Right ventricle myocardium inferior (tissue), 1 donor: ENCODE measurements at regions of chr3 and their contacts with region 1.

Region 1: DNA sequence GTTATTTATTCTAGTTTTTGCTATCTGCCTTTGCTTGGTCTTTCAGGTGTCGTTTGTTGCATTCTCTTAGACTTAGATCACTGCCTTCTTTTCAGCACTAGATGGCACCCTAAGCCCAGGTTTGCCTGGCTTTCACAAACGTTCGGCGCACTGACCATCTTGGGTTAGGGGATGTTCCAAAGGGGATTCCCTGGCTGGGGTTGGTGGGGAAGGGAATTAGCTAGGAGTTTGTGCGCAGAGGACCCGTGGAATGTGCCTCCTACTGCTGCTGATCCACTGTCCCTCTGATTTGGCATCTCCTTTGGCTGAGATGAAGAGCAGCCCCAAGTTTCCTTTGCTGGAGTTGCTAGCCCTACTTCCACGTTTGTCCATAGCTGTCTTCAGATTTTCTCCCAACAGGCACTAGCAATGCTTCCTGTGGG is 33.9 kb downstream of the PFN2 start:
- DNase-seq: peak; percentile 50
- ATAC-seq: peak; percentile 44

Region 2: GRCh38 chr3:149717391-149718056 is 219.3 kb before region 1 on chr3:
- intact Hi-C with region 1: no loop called
- DNase-seq: no peak
- ATAC-seq: peak; percentile 57

Region 3: DNA sequence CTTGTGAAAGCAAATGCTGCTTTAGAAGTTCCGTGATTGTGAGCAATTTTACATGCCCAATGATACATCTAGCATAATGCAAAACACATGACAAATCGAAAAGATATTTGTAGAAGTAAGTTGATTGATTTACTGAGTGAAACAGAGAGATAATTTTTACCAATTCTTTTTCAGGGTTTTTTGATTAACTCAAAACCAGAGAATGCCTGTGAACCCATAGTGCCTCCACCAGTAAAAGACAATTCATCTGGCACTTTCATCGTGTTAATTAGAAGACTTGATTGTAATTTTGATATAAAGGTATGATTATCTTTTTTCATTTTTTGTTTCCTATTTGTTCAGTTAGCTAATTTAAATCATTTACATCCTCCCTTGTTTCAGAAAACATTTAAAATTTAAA is 65.0 kb before region 1 on chr3:
- intact Hi-C with region 1: no loop called
- DNase-seq: no peak
- ATAC-seq: no peak

Region 4: GRCh38 chr3:149990423-149990948 is 53.7 kb after region 1 on chr3:
- intact Hi-C with region 1: no loop called
- DNase-seq: no peak
- ATAC-seq: no peak

Region 5: GRCh38 chr3:150183678-150184425 is 247.0 kb after region 1 on chr3:
- intact Hi-C with region 1: loop called (anchors 10 kb)
- DNase-seq: peak; percentile 73
- ATAC-seq: peak; percentile 89

Region 6: GRCh38 chr3:150220799-150221198 is 284.0 kb after region 1 on chr3:
- intact Hi-C with region 1: loop called (anchors 2 kb)
- DNase-seq: no peak
- ATAC-seq: no peak